ENCODE measurements at regions of chr1 and their contacts with region 1.

Region 1: GRCh38 chr1:42924082-42924850 is 34.4 kb downstream of the SLC2A1 start:
- DNase-seq: peak; percentile 24
- H3K4me3 ChIP-seq: peak overlapping the region; percentile 66
- CTCF ChIP-seq: peak; percentile 7

Region 2: GRCh38 chr1:43065191-43065590 is 140.9 kb after region 1 on chr1:
- CTCF ChIA-PET with region 1: interaction called, 927 read pairs
- POLR2A ChIA-PET with region 1: no interaction called
- DNase-seq: no peak
- H3K4me3 ChIP-seq: no peak overlapping the region
- CTCF ChIP-seq: no peak